HEK293 (cell line): ENCODE measurements at regions of chr17 and their contacts with region 1.

Region 1: GRCh38 chr17:76005263-76006149 is 4.9 kb downstream of the CDK3 start:
- H3K4me3 ChIP-seq: no peak overlapping the region
- H3K27ac ChIP-seq: no peak overlapping the region
- H3K4me1 ChIP-seq: no peaks in the 10 kb centered on the region
- CTCF ChIP-seq: peak; percentile 90

Region 2: GRCh38 chr17:75896415-75897159 is 108.9 kb before region 1 on chr17 and contains the start of gene TRIM65:
- CTCF ChIA-PET with region 1: interaction called, 224 read pairs
- POLR2A ChIA-PET with region 1: no interaction called
- H3K4me3 ChIP-seq: peak within 1 kb of the TSS; percentile 86
- H3K27ac ChIP-seq: peak within 1 kb of the TSS; percentile 98
- H3K4me1 ChIP-seq: peaks cover 10% of the 10 kb centered on the region
- CTCF ChIP-seq: no peak

Region 3: DNA sequence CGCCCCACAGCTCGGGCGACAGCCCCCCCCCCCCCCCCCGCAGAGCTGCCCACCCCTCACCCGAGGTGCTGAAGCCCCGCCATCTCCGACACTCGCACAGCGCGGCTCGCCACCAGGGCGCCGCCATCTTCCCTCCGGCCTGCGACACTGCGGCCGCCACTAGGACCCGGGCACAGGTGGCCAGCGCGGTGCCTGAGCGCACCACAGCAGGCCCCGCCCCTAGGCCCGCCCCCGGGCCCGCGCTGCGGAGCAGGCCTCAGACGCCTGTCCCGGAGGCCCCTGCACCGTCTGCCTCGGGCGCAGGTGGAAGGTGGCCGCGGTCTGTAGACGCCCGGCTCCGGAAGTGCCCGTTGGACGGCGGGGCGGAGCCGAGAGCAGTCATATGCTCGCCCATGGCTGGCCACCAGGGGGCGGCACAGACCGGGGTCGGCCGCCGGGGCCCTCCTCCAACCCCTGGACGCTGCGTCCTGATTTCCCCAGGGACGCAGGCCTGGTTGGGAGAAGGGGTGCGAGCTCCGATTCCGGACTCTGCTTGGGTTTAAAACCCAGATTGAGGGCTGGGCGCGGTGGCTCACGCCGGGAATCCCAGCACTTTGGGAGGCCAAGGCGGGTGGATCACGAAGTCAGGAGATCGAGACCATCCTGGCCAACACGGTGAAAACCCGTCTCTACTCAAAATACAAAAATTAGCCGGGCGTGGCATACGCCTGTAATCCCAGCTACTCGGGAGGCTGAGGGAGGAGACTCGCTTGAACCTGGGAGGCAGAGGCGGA is 100.6 kb before region 1 on chr17 and contains the start of gene MRPL38:
- CTCF ChIA-PET with region 1: interaction called, 224 read pairs
- POLR2A ChIA-PET with region 1: interaction called, 23 read pairs
- H3K4me3 ChIP-seq: peak within 1 kb of the TSS; percentile 92
- H3K27ac ChIP-seq: peak within 1 kb of the TSS; percentile 87
- H3K4me1 ChIP-seq: peaks cover 8% of the 10 kb centered on the region
- CTCF ChIP-seq: peak; percentile 99

Region 4: GRCh38 chr17:75927286-75927922 is 78.1 kb before region 1 on chr17:
- CTCF ChIA-PET with region 1: interaction called, 14 read pairs
- POLR2A ChIA-PET with region 1: no interaction called
- H3K4me3 ChIP-seq: no peak overlapping the region
- H3K27ac ChIP-seq: no peak overlapping the region
- H3K4me1 ChIP-seq: no peaks in the 10 kb centered on the region
- CTCF ChIP-seq: peak; percentile 15; the same call in 1 of the 2 replicates

Region 5: DNA sequence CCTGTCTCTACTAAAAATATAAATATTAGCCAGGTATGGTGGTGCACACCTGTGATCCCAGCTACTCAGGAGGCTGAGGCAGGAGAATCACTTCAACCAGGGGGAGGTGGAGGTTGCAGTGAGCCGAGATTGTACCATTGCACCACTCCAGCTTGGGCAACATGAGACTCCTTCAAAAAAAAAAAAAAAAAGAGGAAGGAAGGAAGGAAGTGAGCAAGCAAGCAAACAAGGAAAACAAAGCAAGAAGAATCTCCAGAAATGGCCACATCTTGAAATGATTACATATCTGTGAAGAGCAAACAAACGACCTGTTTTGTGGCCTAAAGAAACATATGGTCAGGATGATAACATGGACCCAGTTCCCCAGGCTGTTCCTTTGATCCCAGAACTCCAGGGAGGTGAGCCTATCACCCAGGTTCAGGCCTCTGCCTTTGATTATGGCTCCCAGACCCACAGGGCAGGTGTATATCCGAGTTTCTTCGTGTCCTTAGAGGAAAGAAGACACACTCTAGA is 35.4 kb before region 1 on chr17:
- CTCF ChIA-PET with region 1: interaction called, 15 read pairs
- POLR2A ChIA-PET with region 1: no interaction called
- H3K4me3 ChIP-seq: no peak overlapping the region
- H3K27ac ChIP-seq: peak overlapping the region; percentile 27; the same call in 1 of the 2 replicates
- H3K4me1 ChIP-seq: no peaks in the 10 kb centered on the region
- CTCF ChIP-seq: no peak

Region 6: DNA sequence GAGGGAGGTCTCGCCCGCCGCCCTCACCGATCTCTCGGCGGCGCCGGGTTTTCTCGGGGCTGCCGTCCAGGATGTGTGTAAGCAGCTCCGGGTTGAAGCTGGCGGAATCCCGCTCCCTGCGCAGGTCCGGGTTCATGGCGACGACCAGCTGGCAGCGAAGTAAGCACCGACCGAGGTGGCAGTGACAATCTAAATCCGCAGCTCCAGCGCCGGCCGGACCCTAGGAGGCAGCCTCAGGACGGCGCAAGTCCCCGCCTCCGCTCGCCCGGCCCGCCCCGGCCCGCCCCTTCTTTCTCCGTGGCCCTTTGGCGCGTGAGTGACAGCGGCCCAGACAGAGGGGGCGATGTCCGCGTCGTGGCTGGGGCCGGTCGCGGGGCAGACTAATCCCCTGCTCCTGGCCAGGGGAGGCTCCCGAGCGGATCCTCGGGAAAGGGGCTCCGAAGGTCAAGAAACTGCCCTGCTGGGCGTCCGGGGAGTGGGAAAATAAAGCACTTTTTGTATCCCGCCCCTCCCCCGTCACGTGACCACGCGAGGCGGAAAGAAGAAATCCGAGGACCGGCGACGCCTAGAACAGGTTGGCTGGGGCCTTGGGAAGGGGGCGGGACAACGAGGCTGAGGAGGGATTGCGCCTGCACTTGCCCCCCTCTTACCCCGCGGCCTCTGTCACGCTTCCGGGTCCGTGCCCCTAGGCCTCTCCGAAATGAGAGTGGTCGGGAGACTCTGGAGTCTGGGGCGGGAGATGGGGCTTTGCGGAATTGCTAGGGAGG is 26.4 kb before region 1 on chr17 and contains the starts of genes ACOX1 and TEN1:
- CTCF ChIA-PET with region 1: interaction called, 15 read pairs
- POLR2A ChIA-PET with region 1: interaction called, 10 read pairs
- H3K4me3 ChIP-seq: peak within 1 kb of the TSS; percentile 77
- H3K27ac ChIP-seq: peak within 1 kb of the TSS; percentile 96
- H3K4me1 ChIP-seq: peaks cover 24% of the 10 kb centered on the region
- CTCF ChIP-seq: peak; percentile 83

Region 7: GRCh38 chr17:76232342-76232741 is 226.8 kb after region 1 on chr17:
- CTCF ChIA-PET with region 1: no interaction called
- POLR2A ChIA-PET with region 1: no interaction called
- H3K4me3 ChIP-seq: no peak overlapping the region
- H3K27ac ChIP-seq: no peak overlapping the region
- H3K4me1 ChIP-seq: no peaks in the 10 kb centered on the region
- CTCF ChIP-seq: no peak